ENCODE measurements at regions of chr2 and their contacts with region 1.

Region 1: DNA sequence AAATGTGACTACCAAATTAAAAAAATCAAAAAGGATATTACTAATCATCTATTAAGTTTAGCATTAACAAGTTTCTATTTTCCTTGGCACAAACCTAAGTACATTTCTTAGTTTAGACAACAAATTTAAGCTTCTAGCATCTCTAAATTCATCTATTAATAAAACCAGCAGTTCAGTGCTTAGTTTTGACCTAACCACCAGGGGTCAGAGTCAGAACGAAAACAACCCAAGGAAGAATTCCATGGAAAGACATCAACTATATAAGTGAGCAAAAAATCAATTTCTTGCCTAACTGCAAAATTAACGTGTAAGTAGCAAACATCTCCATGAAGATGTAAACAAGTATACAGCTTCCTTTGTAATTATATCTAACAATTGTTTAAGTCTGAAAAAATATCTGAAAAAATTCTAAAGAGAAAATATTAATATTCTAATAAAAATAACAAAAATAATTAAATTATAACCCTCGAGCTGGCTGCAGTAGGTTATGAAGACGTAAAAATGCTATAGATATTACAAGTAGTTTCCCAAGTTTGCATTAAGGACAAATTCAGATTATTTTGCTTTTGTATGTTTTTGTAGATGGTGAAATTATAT is 83.7 kb downstream of the CERKL start:
- DNase-seq: no peak
- ATAC-seq: no peak
- H3K4me3 ChIP-seq: no peak overlapping the region
- H3K27ac ChIP-seq: no peak overlapping the region
- H3K4me1 ChIP-seq: no peaks in the 10 kb centered on the region
- H3K27me3 ChIP-seq: peaks cover 2 to 3% of the 10 kb centered on the region in 2 experiments; a peak in 2 of 4 replicates
- CTCF ChIP-seq: peak; percentile 20 to 48 (median 37); a peak in 5 of 6 replicates
- EP300 ChIP-seq: no peak
- POLR2A ChIP-seq: no peak
- RAD21 ChIP-seq: peak; percentile 47

Region 2: DNA sequence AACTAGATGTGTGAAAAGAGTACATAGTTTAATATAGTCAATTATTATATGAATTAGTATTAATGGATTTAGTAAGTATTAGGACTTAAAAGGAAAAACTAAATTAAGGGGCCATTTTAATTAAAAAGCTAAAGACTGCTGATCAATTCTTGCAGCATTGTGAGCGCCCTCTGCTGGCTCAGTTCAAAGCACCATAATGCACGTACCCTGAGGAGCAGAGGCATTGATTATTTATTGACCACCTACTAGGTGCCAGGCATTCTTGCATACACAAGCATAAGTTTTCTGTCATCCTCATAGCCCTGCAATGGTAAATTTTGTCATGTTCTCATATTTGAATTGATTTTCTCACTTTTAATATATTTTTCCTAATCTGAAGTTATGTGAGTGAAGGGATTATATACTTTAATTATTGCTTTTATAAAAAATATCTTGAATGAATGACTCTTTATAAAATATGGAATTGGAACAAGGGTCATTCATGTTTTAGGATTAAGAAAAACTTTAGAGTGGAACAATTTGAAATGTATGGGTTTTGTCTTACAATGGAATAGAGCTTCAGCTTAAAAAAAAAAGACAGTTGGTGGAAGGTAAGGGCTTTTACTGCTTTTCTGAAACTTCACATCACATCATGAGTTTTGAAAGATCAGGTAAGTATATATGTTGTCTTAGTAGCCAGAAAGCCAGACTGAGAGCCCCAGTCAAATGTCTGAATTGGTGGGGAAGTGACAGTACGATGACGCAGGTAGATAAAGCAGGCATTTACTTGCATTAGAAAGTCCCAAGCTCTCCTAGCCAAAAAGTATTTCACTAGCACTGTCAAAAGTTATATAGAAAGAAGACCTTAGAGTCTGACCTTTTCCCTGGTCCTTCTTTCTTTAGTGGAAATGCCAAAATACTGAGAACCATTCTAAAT is 106.3 kb before region 1 on chr2:
- CTCF ChIA-PET with region 1: interaction called, 14 read pairs
- POLR2A ChIA-PET with region 1: no interaction called
- RAD21 ChIA-PET with region 1: no interaction called
- SMC1A ChIA-PET with region 1: interaction called, 3 read pairs
- in situ Hi-C with region 1: no loop called
- intact Hi-C with region 1: no loop called
- DNase-seq: no peak
- ATAC-seq: peak; percentile 66
- H3K4me3 ChIP-seq: no peak overlapping the region
- H3K27ac ChIP-seq: no peak overlapping the region
- H3K4me1 ChIP-seq: peaks cover 31% of the 10 kb centered on the region
- H3K27me3 ChIP-seq: no peaks in the 10 kb centered on the region
- CTCF ChIP-seq: peak; percentile 74 to 81 (median 79)
- EP300 ChIP-seq: no peak
- POLR2A ChIP-seq: no peak
- RAD21 ChIP-seq: peak; percentile 70

Region 3: DNA sequence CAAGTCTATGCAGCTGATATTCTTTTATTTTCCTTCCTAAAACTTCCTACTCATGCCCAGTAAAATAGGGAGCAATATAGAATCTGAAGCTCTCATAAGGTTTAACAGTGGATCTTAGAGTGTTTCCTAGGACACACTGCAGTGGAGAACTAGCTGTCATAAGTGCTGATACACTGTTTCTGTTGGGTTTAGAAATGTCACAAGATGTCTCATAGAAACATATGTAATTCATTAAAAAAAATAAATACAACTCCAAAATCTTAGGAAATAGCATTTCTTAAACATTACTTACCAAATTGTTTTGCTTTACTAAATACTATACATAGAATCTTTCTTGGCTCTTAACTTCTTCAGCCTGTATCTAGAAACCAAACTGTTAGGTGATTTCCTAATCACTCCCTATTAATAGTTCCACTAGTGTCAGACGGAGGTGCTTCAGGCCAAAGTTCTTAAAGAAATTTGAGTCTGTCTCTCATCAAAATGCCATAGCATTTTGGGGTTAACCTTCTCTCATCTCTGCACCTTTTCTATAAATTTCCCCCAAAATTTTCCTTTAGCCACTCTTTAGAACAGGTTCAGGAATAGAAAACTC is 10.0 kb before region 1 on chr2:
- CTCF ChIA-PET with region 1: interaction called, 29 read pairs
- POLR2A ChIA-PET with region 1: no interaction called
- RAD21 ChIA-PET with region 1: no interaction called
- SMC1A ChIA-PET with region 1: interaction called, 9 read pairs
- in situ Hi-C with region 1: no loop called
- intact Hi-C with region 1: no loop called
- DNase-seq: no peak
- ATAC-seq: peak; percentile 52; the same call in 2 of the 3 replicates
- H3K4me3 ChIP-seq: no peak overlapping the region
- H3K27ac ChIP-seq: no peak overlapping the region
- H3K4me1 ChIP-seq: no peaks in the 10 kb centered on the region
- H3K27me3 ChIP-seq: no peaks in the 10 kb centered on the region
- CTCF ChIP-seq: no peak
- EP300 ChIP-seq: no peak
- POLR2A ChIP-seq: no peak
- RAD21 ChIP-seq: no peak

Region 4: DNA sequence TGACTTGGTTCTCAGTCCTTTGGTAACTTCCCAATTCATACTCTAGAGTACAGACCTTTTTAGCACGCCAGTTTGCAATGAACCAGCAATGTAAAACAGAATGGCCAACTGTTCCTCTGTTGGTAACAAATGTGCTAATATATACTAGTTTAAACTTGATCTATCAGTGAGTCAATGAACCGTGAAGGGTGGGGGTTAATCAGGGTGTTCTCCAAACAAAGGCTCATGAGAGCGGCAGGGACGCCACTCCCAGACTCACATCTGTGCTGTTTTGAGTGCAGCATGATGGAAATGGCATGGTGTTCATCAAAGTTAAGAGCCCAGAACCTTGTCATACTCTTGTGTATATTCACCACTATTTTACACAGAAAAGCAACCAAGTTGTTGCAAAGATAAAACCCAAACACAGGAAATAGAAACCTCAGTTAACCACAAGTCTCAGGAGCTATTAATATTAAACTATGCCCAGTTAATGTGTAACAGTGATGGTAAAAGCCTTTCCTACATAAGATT is 13.4 kb after region 1 on chr2:
- CTCF ChIA-PET with region 1: interaction called, 115 read pairs
- POLR2A ChIA-PET with region 1: interaction called, 3 read pairs
- RAD21 ChIA-PET with region 1: interaction called, 72 read pairs
- SMC1A ChIA-PET with region 1: interaction called, 57 read pairs
- in situ Hi-C with region 1: no loop called
- intact Hi-C with region 1: no loop called
- DNase-seq: peak; percentile 81
- ATAC-seq: peak; percentile 96
- H3K4me3 ChIP-seq: no peak overlapping the region
- H3K27ac ChIP-seq: peak overlapping the region; percentile 12; the same call in 1 of the 2 replicates
- H3K4me1 ChIP-seq: peaks cover 11% of the 10 kb centered on the region
- H3K27me3 ChIP-seq: no peaks in the 10 kb centered on the region
- CTCF ChIP-seq: no peak
- EP300 ChIP-seq: peak; percentile 45 to 68; a peak in 3 of 4 replicates
- POLR2A ChIP-seq: no peak
- RAD21 ChIP-seq: no peak

Region 5: DNA sequence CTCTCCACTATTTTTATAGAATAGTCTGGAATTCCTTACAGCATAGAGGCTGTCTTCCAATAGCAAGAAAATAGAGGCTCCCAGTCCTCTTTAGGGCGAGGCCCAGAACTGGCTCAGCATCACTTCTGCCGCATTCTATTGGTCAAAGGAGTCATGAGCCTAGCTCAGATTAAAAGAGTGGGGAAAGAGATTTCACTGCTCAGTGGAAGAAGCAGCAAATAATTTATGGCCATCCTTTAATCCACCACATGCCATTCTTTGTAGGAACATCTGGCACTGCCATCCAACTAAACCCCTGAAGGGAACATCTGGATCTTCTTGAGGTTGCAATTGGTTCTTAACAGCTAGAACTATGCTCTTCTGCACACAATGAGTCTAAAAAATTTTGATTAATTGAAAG is 150.5 kb after region 1 on chr2:
- CTCF ChIA-PET with region 1: interaction called, 359 read pairs
- POLR2A ChIA-PET with region 1: no interaction called
- RAD21 ChIA-PET with region 1: interaction called, 5 read pairs
- SMC1A ChIA-PET with region 1: interaction called, 337 read pairs
- in situ Hi-C with region 1: loop called (anchors 5 kb)
- intact Hi-C with region 1: no loop called
- DNase-seq: no peak
- ATAC-seq: no peak
- H3K4me3 ChIP-seq: no peak overlapping the region
- H3K27ac ChIP-seq: no peak overlapping the region
- H3K4me1 ChIP-seq: no peaks in the 10 kb centered on the region
- H3K27me3 ChIP-seq: no peaks in the 10 kb centered on the region
- CTCF ChIP-seq: no peak
- EP300 ChIP-seq: no peak
- POLR2A ChIP-seq: no peak
- RAD21 ChIP-seq: no peak

Region 6: GRCh38 chr2:182404092-182404491 is 830.9 kb after region 1 on chr2:
- CTCF ChIA-PET with region 1: no interaction called
- POLR2A ChIA-PET with region 1: no interaction called
- RAD21 ChIA-PET with region 1: no interaction called
- SMC1A ChIA-PET with region 1: no interaction called
- in situ Hi-C with region 1: no loop called
- intact Hi-C with region 1: no loop called
- DNase-seq: no peak
- ATAC-seq: no peak
- H3K4me3 ChIP-seq: no peak overlapping the region
- H3K27ac ChIP-seq: no peak overlapping the region
- H3K4me1 ChIP-seq: no peaks in the 10 kb centered on the region
- H3K27me3 ChIP-seq: no peaks in the 10 kb centered on the region
- CTCF ChIP-seq: no peak
- EP300 ChIP-seq: no peak
- POLR2A ChIP-seq: no peak
- RAD21 ChIP-seq: no peak